T-cell (primary cell): ENCODE measurements at regions of chr10 and their contacts with region 1.

Region 1: GRCh38 chr10:108877095-108877561 is 1046.2 kb downstream of the XPNPEP1 start:
- DNase-seq: no peak
- ATAC-seq: no peak
- H3K4me3 ChIP-seq: no peak overlapping the region
- H3K4me3 Mint-ChIP-seq: no peak overlapping the region
- H3K27ac ChIP-seq: no peak overlapping the region
- H3K27ac Mint-ChIP-seq: no peak overlapping the region
- H3K4me1 ChIP-seq: no peaks in the 10 kb centered on the region
- H3K4me1 Mint-ChIP-seq: no peaks in the 10 kb centered on the region
- H3K27me3 ChIP-seq: no peaks in the 10 kb centered on the region
- H3K27me3 Mint-ChIP-seq: no peaks in the 10 kb centered on the region

Region 2: GRCh38 chr10:107206833-107207232 is 1670.3 kb before region 1 on chr10:
- CTCF ChIA-PET with region 1: no interaction called
- POLR2A ChIA-PET with region 1: interaction called in 1 of 2 experiments, 10 read pairs
- DNase-seq: no peak
- ATAC-seq: no peak
- H3K4me3 ChIP-seq: no peak overlapping the region
- H3K4me3 Mint-ChIP-seq: no peak overlapping the region
- H3K27ac ChIP-seq: no peak overlapping the region
- H3K27ac Mint-ChIP-seq: no peak overlapping the region
- H3K4me1 ChIP-seq: no peaks in the 10 kb centered on the region
- H3K4me1 Mint-ChIP-seq: no peaks in the 10 kb centered on the region
- H3K27me3 ChIP-seq: no peaks in the 10 kb centered on the region
- H3K27me3 Mint-ChIP-seq: no peaks in the 10 kb centered on the region

Region 3: DNA sequence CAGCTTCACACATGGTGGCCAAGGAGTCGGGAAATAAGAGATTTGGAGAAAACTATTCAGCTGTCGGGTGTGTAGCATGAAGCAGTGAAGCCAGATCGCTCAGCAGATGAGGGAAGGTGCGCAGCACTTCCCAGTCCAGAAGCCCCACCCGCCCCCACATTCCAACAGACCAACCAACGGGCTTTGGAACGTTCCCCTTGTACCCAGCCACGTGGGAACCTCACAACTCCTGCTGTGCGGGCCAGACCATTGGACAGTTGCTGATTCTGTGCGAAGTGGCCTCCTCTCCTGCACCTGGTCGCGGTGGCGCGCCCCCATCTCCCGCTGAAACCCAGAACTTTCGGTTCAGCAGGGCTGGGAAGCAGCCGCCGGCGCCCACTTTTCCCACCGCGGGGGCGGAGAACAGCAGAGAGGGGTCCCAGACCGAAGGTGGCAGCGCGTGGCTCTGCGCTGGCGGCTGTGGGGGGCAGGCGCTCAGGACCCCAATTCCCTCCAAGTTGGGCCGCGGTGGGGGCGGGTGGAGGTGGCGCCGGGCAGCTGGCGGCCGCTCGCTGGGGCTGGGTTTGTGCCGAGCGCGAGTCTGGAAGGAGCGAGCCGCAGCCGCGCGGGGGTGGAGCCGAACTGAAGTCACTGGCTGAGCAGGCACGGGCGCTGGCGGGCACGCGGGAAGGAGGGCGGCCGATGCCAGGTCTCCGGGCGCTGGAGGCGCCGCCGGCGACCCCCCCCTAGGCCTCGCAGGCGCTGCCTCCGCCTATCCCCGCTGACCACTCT is 411.1 kb before region 1 on chr10:
- CTCF ChIA-PET with region 1: no interaction called
- POLR2A ChIA-PET with region 1: no interaction called
- DNase-seq: no peak
- ATAC-seq: no peak
- H3K4me3 ChIP-seq: no peak overlapping the region
- H3K4me3 Mint-ChIP-seq: no peak overlapping the region
- H3K27ac ChIP-seq: no peak overlapping the region
- H3K27ac Mint-ChIP-seq: no peak overlapping the region
- H3K4me1 ChIP-seq: no peaks in the 10 kb centered on the region
- H3K4me1 Mint-ChIP-seq: no peaks in the 10 kb centered on the region
- H3K27me3 ChIP-seq: peaks cover 0 to 5% of the 10 kb centered on the region in 2 experiments
- H3K27me3 Mint-ChIP-seq: peaks cover 7 to 11% of the 10 kb centered on the region in 2 donors